Mammary epithelial cell (primary cell): ENCODE measurements at regions of chr11 and their contacts with region 1.

Region 1: DNA sequence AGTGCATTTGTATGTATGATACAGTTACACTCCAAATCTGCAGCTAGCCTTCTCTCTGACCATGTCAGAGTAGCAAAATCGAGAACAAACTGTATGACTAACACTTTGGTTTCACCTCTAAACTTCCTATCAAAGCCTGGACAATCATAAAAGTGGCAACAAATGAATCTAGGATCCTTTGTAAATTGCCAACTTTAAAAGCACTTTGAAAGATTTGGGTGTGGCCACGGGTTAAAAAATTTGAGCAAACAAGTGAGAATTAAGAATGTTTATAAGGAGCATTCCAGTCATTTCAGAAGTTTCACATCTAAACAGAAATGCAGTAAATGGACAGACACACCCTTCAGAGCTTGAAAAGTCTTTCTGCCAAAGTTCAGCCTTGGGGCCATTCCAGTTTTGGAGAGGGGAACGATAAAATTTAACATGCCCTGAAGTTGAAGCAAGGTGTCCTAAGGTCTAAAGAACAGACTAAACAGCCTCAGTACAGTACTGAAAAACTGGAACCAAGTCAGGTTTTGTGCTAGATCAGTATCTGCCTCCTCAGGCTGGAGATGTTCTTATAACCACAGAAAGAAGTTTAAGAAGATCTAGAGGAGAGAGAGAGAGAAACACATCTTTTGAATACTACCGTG is 181.9 kb upstream of the BDNF start:
- DNase-seq: no peak
- H3K4me3 ChIP-seq: no peak overlapping the region
- H3K27ac ChIP-seq: no peak overlapping the region
- H3K4me1 ChIP-seq: no peaks in the 10 kb centered on the region
- H3K27me3 ChIP-seq: no peaks in the 10 kb centered on the region
- CTCF ChIP-seq: no peak

Region 2: GRCh38 chr11:27861706-27862430 is 20.3 kb before region 1 on chr11:
- CTCF ChIA-PET with region 1: no interaction called
- dilution Hi-C with region 1: no loop called
- in situ Hi-C with region 1: no loop called
- intact Hi-C with region 1: loop called (anchors 2 kb)
- DNase-seq: peak; percentile 79
- H3K4me3 ChIP-seq: no peak overlapping the region
- H3K27ac ChIP-seq: no peak overlapping the region
- H3K4me1 ChIP-seq: peaks cover 10% of the 10 kb centered on the region
- H3K27me3 ChIP-seq: no peaks in the 10 kb centered on the region
- CTCF ChIP-seq: no peak

Region 3: DNA sequence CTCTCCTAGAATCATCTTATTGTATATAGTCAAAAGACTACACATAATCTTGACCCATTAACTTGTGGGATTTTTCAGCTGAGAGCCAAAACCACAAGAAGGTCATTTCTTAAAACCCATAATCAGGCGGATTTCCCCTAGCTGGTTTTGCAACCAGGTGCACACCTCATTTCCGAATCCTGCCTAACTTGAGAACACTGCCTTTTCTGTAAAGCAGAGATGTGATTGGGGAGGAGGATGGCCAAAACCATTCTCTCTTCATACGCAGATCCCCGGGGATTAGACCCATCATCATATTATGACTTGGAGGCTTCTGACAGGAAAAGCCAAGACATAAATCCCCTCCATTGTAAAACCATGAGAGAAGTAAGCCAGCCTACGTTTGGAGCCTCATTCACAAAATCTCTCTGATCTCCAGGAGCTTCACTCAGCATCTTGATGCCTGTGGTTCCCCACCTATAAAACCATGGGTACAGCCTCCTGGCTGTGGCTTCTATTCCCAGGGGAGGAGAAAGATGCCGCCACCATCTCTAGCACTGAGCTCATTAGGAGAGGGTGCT is 34.4 kb after region 1 on chr11:
- CTCF ChIA-PET with region 1: no interaction called
- dilution Hi-C with region 1: no loop called
- in situ Hi-C with region 1: no loop called
- intact Hi-C with region 1: no loop called
- DNase-seq: peak; percentile 81
- H3K4me3 ChIP-seq: no peak overlapping the region
- H3K27ac ChIP-seq: no peak overlapping the region
- H3K4me1 ChIP-seq: peaks cover 13% of the 10 kb centered on the region
- H3K27me3 ChIP-seq: no peaks in the 10 kb centered on the region
- CTCF ChIP-seq: no peak